Breast epithelium (tissue), 4 donors: ENCODE measurements at regions of chr9 and their contacts with region 1.

Region 1: GRCh38 chr9:129289883-129290282 is 111.8 kb upstream of the IER5L start:
- DNase-seq: peak in 1 of 2 donors; percentile 15
- H3K4me3 ChIP-seq: no peak overlapping the region
- H3K27ac ChIP-seq: no peak overlapping the region
- H3K4me1 ChIP-seq: no peaks in the 10 kb centered on the region
- H3K27me3 ChIP-seq: no peaks in the 10 kb centered on the region
- CTCF ChIP-seq: no peak
- POLR2A ChIP-seq: no peak

Region 2: DNA sequence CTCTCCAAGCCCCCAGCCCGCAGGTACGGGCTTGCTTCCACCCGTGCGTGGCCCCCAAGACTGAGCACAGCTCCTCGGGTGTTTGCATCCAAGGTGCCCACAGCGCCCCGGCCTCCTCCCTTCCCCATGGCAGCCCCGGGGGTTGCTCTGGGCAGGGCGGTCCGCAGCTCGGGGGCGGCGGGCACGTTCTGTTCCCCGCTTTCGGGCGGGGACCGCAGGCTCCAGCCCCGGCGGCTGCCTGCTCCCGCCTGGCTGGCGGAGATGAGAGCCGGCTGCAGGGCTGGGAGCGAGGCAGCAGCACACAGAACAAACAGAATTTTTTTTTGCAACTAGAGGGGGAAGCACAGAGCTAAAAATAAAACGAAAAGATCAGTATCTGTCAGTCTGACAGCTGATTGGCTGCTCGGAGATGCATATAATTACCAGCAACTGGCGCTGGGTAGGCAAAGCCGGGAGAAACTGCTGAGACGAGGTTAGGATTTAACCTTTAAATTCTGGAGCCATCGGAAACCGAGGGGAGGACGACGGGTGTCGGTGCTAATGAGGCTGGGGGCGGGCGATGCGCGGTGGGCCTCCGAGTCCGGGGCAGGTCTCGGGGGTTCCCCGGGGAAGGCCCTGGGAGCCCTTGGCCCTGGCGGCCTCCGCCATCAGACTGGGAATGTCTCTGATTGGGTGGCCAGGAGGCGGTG is 30.8 kb after region 1 on chr9:
- intact Hi-C with region 1: loop called (anchors 1 kb)
- DNase-seq: peak in 1 of 2 donors; percentile 62
- H3K4me3 ChIP-seq: peak overlapping the region; percentile 39 to 66 (median 46)
- H3K27ac ChIP-seq: peak overlapping the region; percentile 85 to 87
- H3K4me1 ChIP-seq: peaks cover 8 to 19% of the 10 kb centered on the region in 2 donors
- H3K27me3 ChIP-seq: no peaks in the 10 kb centered on the region
- CTCF ChIP-seq: peak in 1 of 3 donors; percentile 30
- POLR2A ChIP-seq: no peak